IMR-90 (cell line): ENCODE measurements at regions of chr1 and their contacts with region 1.

Region 1: DNA sequence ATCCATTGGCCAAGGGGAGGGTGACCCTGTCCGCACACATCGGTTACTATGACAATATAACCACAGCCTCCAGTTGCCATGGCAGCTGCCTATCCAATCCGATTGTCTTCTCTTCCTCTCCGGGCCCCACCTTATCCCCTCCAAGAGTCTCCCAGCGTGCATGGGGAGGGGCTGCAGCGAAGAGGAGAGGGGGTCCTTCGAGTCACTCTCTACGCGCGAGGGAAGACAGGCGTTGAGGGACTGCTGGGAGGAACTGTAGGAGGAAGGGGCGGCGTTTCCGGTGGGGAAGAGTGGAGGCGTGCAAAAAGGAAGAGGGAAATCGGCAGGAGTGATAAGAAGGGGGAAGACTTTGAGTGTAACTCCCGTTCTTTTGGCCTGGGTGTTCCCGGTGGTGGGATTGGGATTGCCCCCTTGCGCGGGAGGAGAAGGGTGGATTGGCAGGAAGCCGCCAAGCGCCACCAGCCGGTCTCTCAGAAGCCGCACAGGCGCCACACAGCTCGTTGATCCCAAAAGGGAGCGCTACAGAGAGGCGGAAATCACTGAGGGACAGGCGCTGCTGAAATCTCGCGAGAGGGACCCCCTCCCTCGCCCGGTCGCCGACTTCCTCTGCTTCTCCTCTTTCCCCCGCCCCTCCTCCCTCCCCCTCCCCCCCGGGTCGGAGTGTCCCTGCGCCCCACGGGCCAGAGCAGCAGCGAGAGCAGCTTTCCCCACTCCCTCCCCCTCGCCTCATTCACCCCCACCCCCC is 384 bp upstream of the SMG7 start:
- DNase-seq: peak; percentile 98
- ATAC-seq: peak; percentile 84
- H3K4me3 ChIP-seq: peak overlapping the region; percentile 99
- H3K27ac ChIP-seq: peak overlapping the region; percentile 98
- H3K4me1 ChIP-seq: peaks cover 2% of the 10 kb centered on the region; the same call in 1 of the 2 replicates
- H3K27me3 ChIP-seq: peaks cover under 1% of the 10 kb centered on the region; the same call in 1 of the 2 replicates
- CTCF ChIP-seq: no peak
- POLR2A ChIP-seq: no peak
- RAD21 ChIP-seq: no peak

Region 2: GRCh38 chr1:183498342-183498991 is 26.6 kb after region 1 on chr1:
- CTCF ChIA-PET with region 1: no interaction called
- POLR2A ChIA-PET with region 1: no interaction called
- dilution Hi-C with region 1: no loop called
- in situ Hi-C with region 1: no loop called
- intact Hi-C with region 1: loop called (anchors 1 kb)
- DNase-seq: no peak
- ATAC-seq: no peak
- H3K4me3 ChIP-seq: no peak overlapping the region
- H3K27ac ChIP-seq: no peak overlapping the region
- H3K4me1 ChIP-seq: peaks cover 2% of the 10 kb centered on the region; the same call in 1 of the 2 replicates
- H3K27me3 ChIP-seq: no peaks in the 10 kb centered on the region
- CTCF ChIP-seq: no peak
- POLR2A ChIP-seq: no peak
- RAD21 ChIP-seq: no peak

Region 3: GRCh38 chr1:183515018-183515689 is 43.2 kb after region 1 on chr1:
- CTCF ChIA-PET with region 1: interaction called, 3 read pairs
- POLR2A ChIA-PET with region 1: interaction called, 5 read pairs
- dilution Hi-C with region 1: no loop called
- in situ Hi-C with region 1: no loop called
- intact Hi-C with region 1: loop called (anchors 5 kb)
- DNase-seq: peak; percentile 93
- ATAC-seq: peak; percentile 94
- H3K4me3 ChIP-seq: no peak overlapping the region
- H3K27ac ChIP-seq: no peak overlapping the region
- H3K4me1 ChIP-seq: peaks cover 4% of the 10 kb centered on the region; the same call in 1 of the 2 replicates
- H3K27me3 ChIP-seq: no peaks in the 10 kb centered on the region
- CTCF ChIP-seq: no peak
- POLR2A ChIP-seq: no peak
- RAD21 ChIP-seq: no peak

Region 4: DNA sequence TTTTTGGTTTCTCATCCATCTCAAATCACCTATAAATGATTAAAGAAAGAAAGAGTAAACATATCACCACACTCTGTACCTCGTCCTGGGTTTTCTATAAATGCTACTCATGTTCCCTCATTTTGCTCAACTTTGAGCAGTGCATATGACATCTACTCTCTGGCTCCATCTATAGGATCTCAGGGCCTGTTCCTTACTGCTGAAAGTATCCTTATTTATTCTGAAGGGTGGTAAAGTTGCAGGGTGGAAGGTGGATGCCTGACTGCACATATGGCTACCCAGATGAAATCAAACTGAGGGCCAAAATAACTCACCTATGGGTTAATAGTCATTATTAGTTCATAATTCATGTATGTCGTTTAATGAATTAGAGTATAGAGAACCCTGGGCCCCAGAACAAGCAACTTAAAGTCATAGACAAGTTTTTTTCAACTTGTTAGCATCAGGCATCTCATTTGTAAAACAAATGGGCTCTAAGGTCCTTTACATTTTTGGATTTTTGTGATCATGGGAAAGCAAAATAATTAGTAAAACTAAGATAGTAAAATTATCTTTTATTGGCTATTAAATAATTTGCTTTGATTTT is 71.8 kb after region 1 on chr1:
- CTCF ChIA-PET with region 1: interaction called, 6 read pairs
- POLR2A ChIA-PET with region 1: no interaction called
- dilution Hi-C with region 1: no loop called
- in situ Hi-C with region 1: loop called (anchors 5 kb)
- intact Hi-C with region 1: loop called (anchors 1 kb)
- DNase-seq: peak; percentile 74
- ATAC-seq: peak; percentile 99
- H3K4me3 ChIP-seq: no peak overlapping the region
- H3K27ac ChIP-seq: no peak overlapping the region
- H3K4me1 ChIP-seq: no peaks in the 10 kb centered on the region; the same call in 1 of the 2 replicates
- H3K27me3 ChIP-seq: no peaks in the 10 kb centered on the region
- CTCF ChIP-seq: peak; percentile 79
- POLR2A ChIP-seq: no peak
- RAD21 ChIP-seq: peak; percentile 82

Region 5: GRCh38 chr1:183609313-183609712 is 137.4 kb after region 1 on chr1:
- CTCF ChIA-PET with region 1: no interaction called
- POLR2A ChIA-PET with region 1: no interaction called
- dilution Hi-C with region 1: no loop called
- in situ Hi-C with region 1: no loop called
- intact Hi-C with region 1: loop called (anchors 5 kb)
- DNase-seq: peak; percentile 81
- ATAC-seq: peak; percentile 54
- H3K4me3 ChIP-seq: no peak overlapping the region
- H3K27ac ChIP-seq: peak overlapping the region; percentile 24
- H3K4me1 ChIP-seq: peaks cover 20% of the 10 kb centered on the region
- H3K27me3 ChIP-seq: no peaks in the 10 kb centered on the region
- CTCF ChIP-seq: peak; percentile 55
- POLR2A ChIP-seq: no peak
- RAD21 ChIP-seq: peak; percentile 61

Region 6: DNA sequence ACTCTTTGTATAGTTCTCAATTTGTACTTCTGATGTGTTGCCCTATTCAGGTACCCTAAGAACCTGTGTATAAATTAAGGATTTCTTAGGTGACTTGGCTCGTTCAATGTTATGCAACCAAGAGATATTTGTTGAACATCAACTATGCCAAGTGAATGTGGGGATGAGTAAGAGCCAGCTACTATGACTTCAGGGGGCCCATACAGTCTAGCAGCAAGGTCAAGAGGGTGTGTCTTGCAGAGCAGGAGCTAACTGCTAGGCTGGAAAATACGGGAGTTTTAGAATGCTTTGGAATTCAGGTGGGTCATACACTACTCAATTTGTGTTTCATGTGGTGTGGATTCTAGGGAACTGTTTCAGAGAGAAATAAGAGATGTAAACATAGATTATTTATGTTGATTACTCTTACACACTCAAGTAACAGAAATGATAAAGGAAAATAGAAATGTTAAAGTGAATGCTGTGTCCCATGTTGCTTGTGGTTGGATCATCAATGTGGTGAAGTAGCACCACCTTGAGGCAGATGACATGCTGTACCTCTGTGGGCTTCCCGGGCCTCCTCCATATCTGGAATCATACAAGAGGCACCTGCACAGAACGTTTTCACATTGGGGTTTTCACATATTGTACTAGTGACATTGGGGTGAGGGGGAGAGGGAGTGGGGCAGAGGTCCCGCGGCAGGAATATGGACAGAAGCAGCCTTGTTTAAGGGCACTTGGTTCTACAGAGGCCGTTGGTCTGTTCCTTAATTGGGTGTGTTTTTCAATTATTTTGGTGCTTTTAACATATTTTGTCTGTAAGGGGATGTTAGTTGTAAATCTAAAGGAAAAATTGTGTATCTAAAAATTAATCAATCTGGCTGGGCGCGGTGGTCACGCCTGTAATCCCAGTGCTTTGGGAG is 151.2 kb after region 1 on chr1:
- CTCF ChIA-PET with region 1: no interaction called
- POLR2A ChIA-PET with region 1: no interaction called
- dilution Hi-C with region 1: no loop called
- in situ Hi-C with region 1: loop called (anchors 10 kb)
- intact Hi-C with region 1: loop called (anchors 1 kb)
- DNase-seq: peak; percentile 78
- ATAC-seq: peak; percentile 86
- H3K4me3 ChIP-seq: no peak overlapping the region
- H3K27ac ChIP-seq: no peak overlapping the region
- H3K4me1 ChIP-seq: peaks cover 3% of the 10 kb centered on the region
- H3K27me3 ChIP-seq: no peaks in the 10 kb centered on the region
- CTCF ChIP-seq: peak; percentile 73
- POLR2A ChIP-seq: no peak
- RAD21 ChIP-seq: peak; percentile 85